ENCODE measurements at regions of chr4 and their contacts with region 1.

Region 1: DNA sequence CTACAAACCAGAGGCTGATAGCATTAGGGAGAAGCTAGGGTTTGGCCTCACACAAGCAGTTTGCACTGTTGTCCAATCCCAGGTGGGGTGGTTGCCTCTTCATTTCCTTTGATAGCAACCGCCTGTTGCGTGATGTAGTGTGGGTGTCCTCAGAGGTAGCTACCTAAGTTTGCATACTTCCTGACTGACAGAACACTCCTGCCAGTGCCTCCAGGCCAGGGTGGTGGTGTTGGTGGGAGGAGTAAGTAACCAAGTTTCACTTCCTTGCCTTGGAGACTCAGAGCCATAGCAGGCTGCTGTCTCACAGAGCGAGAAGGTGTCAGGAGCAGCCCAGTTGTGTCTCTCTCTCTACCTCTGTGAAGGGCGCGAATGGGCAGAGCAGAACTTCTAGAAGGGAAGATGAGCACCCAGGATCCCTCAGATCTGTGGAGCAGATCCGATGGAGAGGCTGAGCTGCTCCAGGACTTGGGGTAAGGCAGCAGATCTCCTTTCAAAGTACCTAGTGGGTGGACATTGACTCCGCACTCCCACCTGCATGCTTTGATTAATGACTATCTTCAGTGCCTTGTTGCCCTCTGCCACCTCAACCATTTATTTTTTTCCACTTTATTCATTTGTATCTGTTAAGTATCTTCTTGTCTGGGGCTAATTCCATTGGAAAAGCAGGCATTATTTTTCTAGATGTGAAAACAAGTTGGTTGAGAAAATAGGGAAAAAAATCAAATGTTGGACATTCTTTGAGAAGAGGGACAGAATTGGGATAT is at the start of gene DAPP1:
- DNase-seq: peak; percentile 64
- ATAC-seq: peak; percentile 92
- H3K4me3 Mint-ChIP-seq: peak within 1 kb of the TSS; percentile 89
- H3K27ac Mint-ChIP-seq: peak within 1 kb of the TSS; percentile 88
- H3K4me1 Mint-ChIP-seq: peaks cover 75% of the 10 kb centered on the region
- H3K27me3 Mint-ChIP-seq: no peaks in the 10 kb centered on the region
- CTCF ChIP-seq: no peak
- total RNA-seq, gene DAPP1: 137 and 144 TPM in 2 replicates

Region 2: DNA sequence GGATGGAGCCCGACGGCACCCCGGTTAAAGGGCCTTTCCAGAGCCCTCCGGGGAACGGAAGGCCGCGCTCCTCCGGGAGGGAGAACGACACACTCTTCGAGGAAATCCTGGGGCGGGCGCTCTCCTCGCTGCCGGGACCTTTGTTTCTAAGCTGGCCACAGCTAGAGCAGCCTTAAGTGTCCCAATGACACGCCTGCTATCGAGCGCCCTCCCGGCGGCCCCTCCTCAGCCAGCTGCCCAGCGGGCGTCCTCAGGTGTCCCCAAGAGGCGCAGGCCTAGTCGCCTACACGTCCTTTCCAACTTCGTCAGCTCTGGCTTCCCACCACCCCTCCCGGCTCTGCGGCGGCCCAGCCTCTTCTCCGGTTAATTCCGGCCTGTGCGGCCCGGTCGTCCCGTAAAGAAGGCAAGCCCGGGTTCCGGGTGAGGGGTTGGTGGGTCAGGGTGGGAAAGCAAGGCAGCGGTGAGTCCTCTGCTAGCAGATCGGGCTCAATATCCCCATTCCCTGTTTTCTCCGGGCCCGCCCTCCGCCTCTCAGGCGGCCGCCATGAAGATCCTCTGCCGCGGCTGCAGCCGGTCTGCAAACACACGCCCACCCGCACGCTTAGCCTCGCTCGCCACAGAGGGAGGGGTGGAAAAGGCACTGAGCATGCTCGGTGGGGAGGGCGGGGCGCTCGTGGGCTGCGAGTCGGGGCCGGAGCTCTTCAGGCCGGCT is 1556.0 kb before region 1 on chr4:
- CTCF ChIA-PET with region 1: no interaction called
- POLR2A ChIA-PET with region 1: interaction called, 6 read pairs
- intact Hi-C with region 1: loop called (anchors 10 kb)
- DNase-seq: peak; percentile 89
- ATAC-seq: peak; percentile 93
- H3K4me3 Mint-ChIP-seq: peak overlapping the region; percentile 95
- H3K27ac Mint-ChIP-seq: peak overlapping the region; percentile 94
- H3K4me1 Mint-ChIP-seq: peaks cover 48% of the 10 kb centered on the region
- H3K27me3 Mint-ChIP-seq: no peaks in the 10 kb centered on the region
- CTCF ChIP-seq: no peak

Region 3: DNA sequence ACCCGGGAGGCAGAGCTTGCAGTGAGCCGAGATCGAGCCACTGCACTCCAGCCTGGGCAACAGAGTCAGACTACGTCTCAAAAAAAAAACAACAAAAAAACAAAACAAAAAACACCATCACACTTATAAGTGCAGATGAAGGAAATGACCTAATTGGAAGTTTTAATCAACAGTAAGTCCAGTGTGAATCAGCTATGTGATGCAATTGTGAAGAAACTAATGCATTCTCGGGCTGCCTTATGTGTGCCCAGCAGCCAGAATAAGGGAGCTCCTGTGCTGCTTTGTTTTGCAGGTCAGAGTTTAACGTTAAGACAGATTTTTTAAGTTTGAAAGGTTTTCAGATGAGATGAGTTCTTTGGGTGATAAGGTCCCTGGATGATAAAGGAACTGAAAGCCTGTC is 10.7 kb after region 1 on chr4:
- CTCF ChIA-PET with region 1: interaction called, 10 read pairs
- POLR2A ChIA-PET with region 1: interaction called, 25 read pairs
- intact Hi-C with region 1: loop called (anchors 2 kb)
- DNase-seq: no peak
- ATAC-seq: no peak
- H3K4me3 Mint-ChIP-seq: peak overlapping the region; percentile 9
- H3K27ac Mint-ChIP-seq: peak overlapping the region; percentile 38
- H3K4me1 Mint-ChIP-seq: peaks cover 81% of the 10 kb centered on the region
- H3K27me3 Mint-ChIP-seq: no peaks in the 10 kb centered on the region
- CTCF ChIP-seq: no peak

Region 4: DNA sequence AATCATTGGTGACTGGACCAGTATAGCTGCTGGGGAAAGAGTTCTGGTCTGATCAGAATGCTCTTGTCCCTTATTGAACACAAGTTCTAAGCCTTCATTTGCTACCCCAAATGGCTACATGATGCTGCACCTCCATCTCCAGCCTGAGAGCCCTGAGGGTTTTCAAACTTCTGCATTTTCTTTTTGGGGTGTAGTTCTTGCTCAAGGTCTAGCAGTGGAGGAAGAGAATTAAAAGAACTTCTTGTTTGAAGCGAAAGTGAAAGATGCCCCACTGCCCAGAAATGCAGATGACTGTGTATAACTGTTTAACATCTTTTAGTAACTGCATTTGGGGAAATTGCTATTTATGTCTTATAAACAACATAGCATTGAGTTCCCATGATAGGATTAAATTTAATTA is 39.0 kb after region 1 on chr4:
- CTCF ChIA-PET with region 1: interaction called, 15 read pairs
- POLR2A ChIA-PET with region 1: interaction called, 73 read pairs
- intact Hi-C with region 1: loop called (anchors 1 kb)
- DNase-seq: no peak
- ATAC-seq: peak; percentile 59
- H3K4me3 Mint-ChIP-seq: peak overlapping the region; percentile 33
- H3K27ac Mint-ChIP-seq: peak overlapping the region; percentile 90
- H3K4me1 Mint-ChIP-seq: peaks cover 80% of the 10 kb centered on the region
- H3K27me3 Mint-ChIP-seq: no peaks in the 10 kb centered on the region
- CTCF ChIP-seq: no peak

Region 5: DNA sequence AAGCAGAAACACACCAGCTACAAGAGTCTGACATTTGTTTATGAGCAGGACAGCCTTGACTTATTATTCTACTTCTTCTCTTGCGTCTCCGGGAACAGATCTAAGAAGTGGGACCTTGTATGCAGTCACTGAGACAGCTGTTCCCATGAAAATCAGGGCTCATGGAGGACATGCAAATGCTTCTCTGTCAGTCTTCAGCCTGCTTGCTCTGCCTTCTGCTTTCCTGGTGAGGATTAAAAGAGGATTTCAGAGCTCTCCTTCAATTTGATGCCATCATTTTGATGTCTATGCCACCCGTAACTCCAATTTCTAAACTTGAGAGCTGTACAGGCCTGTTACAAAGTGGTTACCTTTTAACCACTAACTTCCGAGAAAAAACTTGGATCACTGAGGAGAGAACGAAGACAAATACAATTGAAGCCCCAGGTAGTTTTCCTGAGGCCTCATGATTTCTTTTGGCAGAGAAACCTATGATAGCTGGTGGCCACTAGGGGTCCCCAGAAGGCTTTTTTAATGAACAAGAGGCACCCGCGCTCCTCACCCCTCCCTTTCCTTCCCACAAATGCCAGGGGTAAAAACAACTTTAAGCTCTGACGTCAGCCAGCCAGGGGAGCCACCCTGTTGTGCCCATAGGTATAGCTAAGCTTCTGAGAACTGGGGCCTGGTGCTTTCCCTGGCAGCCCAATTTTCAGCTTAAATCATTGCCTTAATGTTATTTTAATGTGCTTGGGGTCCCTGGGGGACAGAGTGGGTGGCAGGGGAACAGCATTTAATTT is 276.6 kb after region 1 on chr4:
- CTCF ChIA-PET with region 1: no interaction called
- POLR2A ChIA-PET with region 1: no interaction called
- intact Hi-C with region 1: loop called (anchors 10 kb)
- DNase-seq: peak; percentile 58
- ATAC-seq: peak; percentile 97
- H3K4me3 Mint-ChIP-seq: no peak overlapping the region
- H3K27ac Mint-ChIP-seq: peak overlapping the region; percentile 78
- H3K4me1 Mint-ChIP-seq: peaks cover 32% of the 10 kb centered on the region
- H3K27me3 Mint-ChIP-seq: no peaks in the 10 kb centered on the region
- CTCF ChIP-seq: no peak